ENCODE measurements at regions of chr2 and their contacts with region 1.

Region 1: DNA sequence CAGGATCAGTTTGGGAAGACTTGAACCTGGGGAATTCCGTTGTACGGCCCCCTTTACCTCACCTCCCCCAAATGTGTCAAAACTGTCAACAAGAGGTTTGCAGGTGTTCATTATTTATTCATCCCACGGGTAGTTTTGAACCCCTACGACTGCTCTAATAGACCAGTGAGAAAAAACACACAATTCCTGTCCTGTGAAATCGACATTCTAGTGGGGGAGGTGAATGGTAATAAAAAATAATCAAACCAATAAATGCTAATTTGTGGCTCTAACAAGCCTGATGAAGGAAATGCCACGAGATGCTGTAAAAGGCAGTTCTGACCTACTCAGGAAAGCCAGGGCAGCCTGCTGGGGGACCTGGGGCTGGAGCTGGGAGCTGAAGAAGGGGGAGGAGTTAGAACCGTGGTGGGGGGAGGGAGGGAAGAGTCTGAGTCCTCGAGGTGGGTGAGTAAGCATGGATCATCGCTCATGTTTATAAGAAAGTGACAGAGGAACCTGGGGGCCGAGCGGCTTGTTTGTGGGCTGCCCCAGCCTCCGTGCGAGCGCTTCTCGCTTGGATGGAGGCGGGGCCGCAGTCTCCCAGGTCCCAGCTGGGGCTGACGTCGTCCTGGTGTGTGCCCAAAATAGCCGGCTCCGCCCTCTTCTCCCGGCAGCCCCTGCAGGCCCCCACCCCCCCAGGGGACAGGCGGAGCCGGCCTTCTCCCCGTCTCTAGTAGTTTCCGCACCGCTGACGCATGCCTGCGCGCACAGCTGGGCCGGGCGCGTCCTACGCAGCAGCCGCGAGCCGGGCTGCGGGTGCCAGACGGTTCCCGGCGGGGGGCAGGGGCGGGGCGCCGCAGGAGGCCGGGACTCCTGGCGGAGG is at the start of gene DNAJB2:
- DNase-seq: peak; percentile 98

Region 2: DNA sequence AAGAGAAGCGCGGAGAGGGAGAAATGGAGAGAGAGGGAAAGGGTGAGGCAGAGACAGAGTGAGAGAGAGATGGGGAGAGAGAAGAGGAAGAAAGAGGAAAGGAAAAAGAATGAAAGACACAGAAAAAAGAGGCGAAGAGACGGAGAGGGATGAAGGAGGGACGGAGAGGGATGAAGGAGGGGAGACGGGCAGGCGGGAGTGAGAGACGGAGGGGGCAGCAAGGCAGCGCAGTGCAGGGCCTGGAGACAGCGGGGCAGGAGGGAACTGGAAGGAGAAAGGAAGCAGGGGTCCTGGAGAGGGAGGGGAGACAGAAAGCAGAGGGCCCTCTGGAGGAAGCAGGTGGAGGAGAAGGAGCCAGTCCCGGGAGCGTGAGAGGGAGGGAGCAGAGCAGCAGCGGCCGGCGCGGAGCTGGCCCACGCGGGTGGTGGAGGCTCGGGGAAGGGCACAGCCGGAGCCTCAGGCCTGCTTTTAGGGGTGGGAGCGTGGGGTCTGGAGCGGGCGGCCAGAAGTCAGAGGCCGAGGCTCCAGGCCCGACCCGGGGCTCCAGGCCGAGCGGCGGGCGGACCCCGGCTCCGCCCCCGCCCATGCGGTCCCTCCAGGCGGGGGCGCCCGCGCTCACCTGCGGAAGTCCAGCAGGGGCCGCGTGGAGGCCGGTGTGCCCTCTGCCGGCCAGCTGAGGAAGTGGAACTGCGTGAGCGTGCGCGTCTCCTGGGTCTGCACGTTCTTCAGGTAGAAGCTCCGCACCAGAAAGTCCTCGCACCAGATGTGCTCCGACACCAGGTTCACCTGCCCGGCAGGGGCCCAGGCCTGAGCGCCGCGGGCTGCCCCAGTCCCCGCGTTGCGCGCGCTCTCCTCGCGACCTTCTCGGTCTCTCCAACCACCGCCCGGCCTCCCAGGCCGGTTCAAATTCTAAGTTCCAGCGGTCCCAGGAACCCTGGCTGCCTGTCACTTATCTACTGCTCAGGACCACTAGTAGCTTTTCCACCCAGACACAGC is 15.8 kb after region 1 on chr2:
- CTCF ChIA-PET with region 1: interaction called, 36 read pairs
- POLR2A ChIA-PET with region 1: interaction called, 22 read pairs
- DNase-seq: peak; percentile 94

Region 3: GRCh38 chr2:219362524-219363164 is 83.8 kb after region 1 on chr2:
- CTCF ChIA-PET with region 1: no interaction called
- POLR2A ChIA-PET with region 1: no interaction called
- DNase-seq: no peak

Measured in HEK293T (cell line).